ENCODE measurements at regions of chr15 and their contacts with region 1.

Region 1: GRCh38 chr15:90327311-90327710 is 24.8 kb upstream of the ZNF774 start:
- DNase-seq: no peak
- ATAC-seq: no peak

Region 2: GRCh38 chr15:90482124-90483011 is 155.1 kb after region 1 on chr15:
- intact Hi-C with region 1: loop called (anchors 5 kb)
- DNase-seq: no peak
- ATAC-seq: peak; percentile 83